T-cell (primary cell): ENCODE measurements at regions of chr12 and their contacts with region 1.

Region 1: GRCh38 chr12:49549735-49550692 is 11.2 kb downstream of the KCNH3 start:
- DNase-seq: no peak
- ATAC-seq: no peak
- H3K4me3 ChIP-seq: peak overlapping the region in 1 of 2 donors; percentile 39
- H3K4me3 Mint-ChIP-seq: peak overlapping the region; percentile 47 to 76 (median 74)
- H3K27ac ChIP-seq: no peak overlapping the region
- H3K27ac Mint-ChIP-seq: peak overlapping the region in 1 of 2 donors; percentile 39
- H3K4me1 ChIP-seq: peaks cover 2 to 21% of the 10 kb centered on the region in 2 experiments
- H3K4me1 Mint-ChIP-seq: peaks cover 7 to 10% (median 9%) of the 10 kb centered on the region in 3 donors
- H3K27me3 ChIP-seq: peaks cover 0 to 57% of the 10 kb centered on the region in 2 experiments
- H3K27me3 Mint-ChIP-seq: peaks cover 0 to 30% of the 10 kb centered on the region in 2 donors

Region 2: DNA sequence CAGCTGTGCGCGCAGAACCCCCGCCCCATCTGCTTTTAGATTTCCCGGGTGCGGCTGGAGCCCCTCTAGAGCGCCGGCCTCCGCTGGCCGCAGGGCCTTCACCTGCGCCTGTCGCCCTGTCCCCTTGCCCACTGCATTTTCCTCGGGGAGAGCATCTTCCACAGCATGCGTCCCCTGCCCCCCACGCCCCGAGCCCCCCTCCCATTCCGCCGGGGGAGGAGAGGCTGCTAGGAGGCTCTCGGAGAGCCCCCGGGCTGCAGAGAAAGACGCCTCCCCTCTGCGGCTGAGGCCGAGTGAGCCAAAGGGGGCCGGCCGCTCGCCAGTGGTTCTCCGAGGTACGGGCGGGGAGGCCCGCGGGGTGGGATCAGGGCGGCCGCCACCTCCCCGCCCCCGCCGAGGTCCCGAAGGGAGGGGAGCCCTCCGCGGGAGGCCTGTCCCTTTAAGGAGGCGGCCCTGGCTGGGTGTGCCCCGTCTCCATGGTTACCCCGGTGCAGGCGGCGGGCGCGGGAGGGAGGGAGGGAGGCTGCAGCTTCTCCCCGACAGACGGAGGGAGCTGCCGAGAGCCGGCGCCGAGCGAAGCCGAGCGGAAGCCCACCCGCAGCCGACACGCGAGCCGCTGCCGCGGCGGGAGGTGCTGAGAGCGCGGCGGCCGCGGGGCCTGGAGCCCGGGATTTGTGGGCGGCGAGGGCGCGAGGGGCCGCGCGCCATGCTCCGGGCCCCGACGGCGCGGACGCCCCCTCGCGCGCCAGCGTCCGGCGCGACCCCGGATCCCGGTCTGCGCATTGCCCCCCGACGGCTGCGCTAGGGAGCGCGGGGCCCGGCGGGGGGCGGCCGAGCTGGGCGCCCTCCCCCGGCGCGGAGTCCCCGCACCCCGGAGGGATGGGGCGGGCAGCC is 11.3 kb before region 1 on chr12 and contains the start of gene KCNH3:
- CTCF ChIA-PET with region 1: interaction called in 1 of 2 experiments, 3 read pairs
- POLR2A ChIA-PET with region 1: interaction called in 1 of 2 experiments, 10 read pairs
- DNase-seq: peak; percentile 80 to 93 (median 91)
- ATAC-seq: peak; percentile 92 to 95 (median 94)
- H3K4me3 ChIP-seq: peak within 1 kb of the TSS; percentile 59 to 60
- H3K4me3 Mint-ChIP-seq: peak within 1 kb of the TSS; percentile 76 to 78 (median 77)
- H3K27ac ChIP-seq: no peak within 1 kb of the TSS
- H3K27ac Mint-ChIP-seq: peak within 1 kb of the TSS in 1 of 2 donors; percentile 34
- H3K4me1 ChIP-seq: peaks cover 6 to 35% of the 10 kb centered on the region in 2 experiments
- H3K4me1 Mint-ChIP-seq: peaks cover 23 to 33% (median 26%) of the 10 kb centered on the region in 3 donors
- H3K27me3 ChIP-seq: peaks cover 6 to 32% of the 10 kb centered on the region in 2 experiments
- H3K27me3 Mint-ChIP-seq: peaks cover 0 to 8% of the 10 kb centered on the region in 2 donors
- total RNA-seq, gene KCNH3: 3.4 to 8.0 (median 5.5) TPM